MCF 10A (cell line): ENCODE measurements at regions of chr18 and their contacts with region 1.

Region 1: DNA sequence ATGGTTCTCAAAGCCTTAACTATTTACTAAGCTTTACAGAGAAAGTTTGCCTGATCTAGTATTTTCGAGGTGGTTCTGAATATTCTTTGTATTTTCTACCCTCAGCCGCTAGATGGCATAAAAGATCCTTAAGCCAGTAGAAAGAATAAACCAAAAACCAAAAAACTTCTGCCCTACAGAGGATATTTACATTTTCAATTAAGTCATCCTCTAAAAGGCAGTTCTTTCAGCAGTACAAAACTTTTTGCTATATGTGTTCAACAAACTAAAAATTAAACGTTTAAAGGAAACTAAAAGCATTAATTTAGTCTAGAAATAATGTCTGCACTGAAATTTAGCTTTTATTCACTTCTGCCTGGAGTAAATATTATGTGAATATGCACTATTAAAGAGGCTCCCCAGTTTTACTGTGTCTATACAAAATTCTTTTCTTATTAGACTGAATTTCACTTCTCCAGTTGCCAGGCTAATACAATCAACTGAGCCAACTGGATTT is 297.5 kb downstream of the PIEZO2 start:
- DNase-seq: peak; percentile 55
- H3K4me3 Mint-ChIP-seq: no peak overlapping the region
- H3K27ac Mint-ChIP-seq: no peak overlapping the region
- H3K4me1 Mint-ChIP-seq: peaks cover 6% of the 10 kb centered on the region
- H3K27me3 Mint-ChIP-seq: no peaks in the 10 kb centered on the region
- CTCF ChIP-seq: peak; percentile 69

Region 2: GRCh38 chr18:10560450-10561045 is 291.3 kb before region 1 on chr18:
- CTCF ChIA-PET with region 1: interaction called, 12 read pairs
- POLR2A ChIA-PET with region 1: interaction called, 3 read pairs
- intact Hi-C with region 1: loop called (anchors 5 kb)
- DNase-seq: peak; percentile 73
- H3K4me3 Mint-ChIP-seq: no peak overlapping the region
- H3K27ac Mint-ChIP-seq: peak overlapping the region; percentile 77
- H3K4me1 Mint-ChIP-seq: peaks cover 44% of the 10 kb centered on the region
- H3K27me3 Mint-ChIP-seq: no peaks in the 10 kb centered on the region
- CTCF ChIP-seq: peak; percentile 49

Region 3: DNA sequence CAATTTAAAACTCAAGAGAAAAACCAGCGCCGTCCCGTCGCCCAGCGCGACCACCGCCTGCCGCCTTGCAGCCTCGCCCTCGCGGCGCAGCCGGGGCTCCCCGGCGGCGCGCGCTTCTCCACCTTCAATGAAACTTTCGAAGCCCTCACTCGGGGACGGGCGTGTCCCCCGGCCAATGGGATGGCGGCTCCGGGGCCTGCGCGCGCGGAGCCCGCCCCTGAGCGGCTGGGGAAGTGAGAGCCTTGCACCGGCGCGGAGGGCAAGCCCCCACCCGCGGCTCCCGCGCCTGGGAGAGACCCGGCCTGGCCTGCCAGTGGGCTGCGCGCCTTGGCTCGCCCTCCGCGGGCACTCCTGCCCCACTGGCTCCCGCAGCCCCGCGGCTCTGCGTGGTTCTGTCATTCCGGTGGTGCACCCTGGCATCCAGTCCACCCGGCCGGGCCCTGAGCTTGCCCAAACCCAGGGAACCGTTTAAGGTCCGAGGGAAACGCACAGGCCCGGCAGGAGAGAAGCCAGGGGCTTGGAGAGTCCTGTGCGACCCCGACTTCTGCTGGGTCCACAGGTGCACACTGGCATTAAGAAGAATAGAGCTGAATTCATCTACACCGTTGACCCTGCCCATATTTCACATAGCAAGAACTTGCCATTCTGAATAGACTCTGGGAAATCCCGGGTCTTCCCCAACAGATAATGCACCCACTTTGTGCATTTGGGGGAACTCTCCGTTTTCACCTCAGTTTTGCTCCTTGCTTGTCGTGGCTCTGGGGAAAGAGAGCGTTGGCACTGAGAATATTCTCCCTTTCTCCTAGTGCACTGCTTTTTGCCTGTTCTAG is 297.8 kb after region 1 on chr18 and contains the start of gene PIEZO2:
- CTCF ChIA-PET with region 1: interaction called, 48 read pairs
- POLR2A ChIA-PET with region 1: interaction called, 6 read pairs
- intact Hi-C with region 1: loop called (anchors 1 kb)
- DNase-seq: no peak
- H3K4me3 Mint-ChIP-seq: no peak within 1 kb of the TSS
- H3K27ac Mint-ChIP-seq: no peak within 1 kb of the TSS
- H3K4me1 Mint-ChIP-seq: no peaks in the 10 kb centered on the region
- H3K27me3 Mint-ChIP-seq: peaks cover 54% of the 10 kb centered on the region
- CTCF ChIP-seq: no peak
- total RNA-seq, gene PIEZO2: 0.49 and 0.93 TPM in 2 replicates

Region 4: GRCh38 chr18:11512096-11513030 is 660.5 kb after region 1 on chr18:
- CTCF ChIA-PET with region 1: interaction called, 9 read pairs
- POLR2A ChIA-PET with region 1: no interaction called
- intact Hi-C with region 1: loop called (anchors 5 kb)
- DNase-seq: peak; percentile 68
- H3K4me3 Mint-ChIP-seq: no peak overlapping the region
- H3K27ac Mint-ChIP-seq: no peak overlapping the region
- H3K4me1 Mint-ChIP-seq: no peaks in the 10 kb centered on the region
- H3K27me3 Mint-ChIP-seq: peaks cover 17% of the 10 kb centered on the region
- CTCF ChIP-seq: peak; percentile 74